IMR-90 (cell line): ENCODE measurements at regions of chr11 and their contacts with region 1.

Region 1: DNA sequence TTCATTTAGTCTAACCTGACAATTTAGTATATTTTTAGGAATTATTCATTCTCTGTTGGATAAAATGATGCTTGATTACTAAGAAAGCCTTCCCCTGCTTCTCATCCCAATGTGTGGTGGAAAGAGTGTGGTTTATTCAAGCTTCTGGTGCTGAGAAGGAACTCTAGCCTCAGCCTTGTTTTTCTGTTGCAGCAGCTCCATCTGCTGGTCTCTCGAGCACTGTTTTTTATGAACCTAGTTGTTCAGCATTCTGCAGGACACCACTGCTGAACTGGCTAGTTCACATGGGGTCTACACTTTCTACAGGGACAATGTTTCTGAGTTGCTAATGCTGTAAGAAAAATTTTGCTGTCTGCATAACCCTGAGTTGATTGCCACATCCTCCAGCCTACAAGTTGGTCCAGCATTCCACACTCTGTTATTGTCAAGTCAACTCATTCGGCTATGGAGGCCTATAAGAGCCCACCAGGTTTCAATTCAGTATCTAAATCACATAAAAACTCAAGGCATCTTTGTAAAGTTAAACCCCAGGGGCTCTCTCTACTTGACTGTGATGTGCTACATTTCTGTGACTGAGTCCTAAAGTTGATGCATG is 14.3 kb downstream of the OR2AG2 start:
- DNase-seq: peak; percentile 59
- ATAC-seq: peak; percentile 90
- H3K4me3 ChIP-seq: no peak overlapping the region
- H3K27ac ChIP-seq: no peak overlapping the region
- H3K4me1 ChIP-seq: no peaks in the 10 kb centered on the region
- H3K27me3 ChIP-seq: no peaks in the 10 kb centered on the region; the same call in 1 of the 2 replicates
- CTCF ChIP-seq: peak; percentile 54
- POLR2A ChIP-seq: no peak
- RAD21 ChIP-seq: peak; percentile 50; the same call in 1 of the 2 replicates

Region 2: DNA sequence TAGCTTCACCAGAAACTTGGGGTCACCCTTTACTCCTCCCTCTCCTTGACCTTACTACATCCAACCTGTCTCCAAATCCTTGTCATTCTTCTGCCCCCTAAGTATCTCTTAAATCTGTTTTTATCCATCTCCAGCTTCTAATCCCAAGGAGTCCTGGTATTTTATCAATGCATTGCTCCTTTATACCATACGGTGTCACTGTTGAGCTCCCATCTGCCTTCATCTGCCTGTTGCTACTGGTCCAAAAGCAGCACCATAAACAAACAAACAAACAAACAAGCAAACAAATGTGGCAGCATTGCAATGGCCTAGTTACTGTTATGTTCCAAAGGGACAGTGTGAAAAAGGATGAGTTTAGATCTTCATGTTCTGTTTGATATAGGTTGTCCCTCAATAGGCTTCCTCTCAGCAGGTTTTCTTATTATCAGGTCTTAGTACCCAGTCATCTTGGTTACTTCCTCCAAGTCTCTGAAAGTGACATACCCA is 226.2 kb before region 1 on chr11:
- CTCF ChIA-PET with region 1: no interaction called
- POLR2A ChIA-PET with region 1: no interaction called
- dilution Hi-C with region 1: no loop called
- in situ Hi-C with region 1: no loop called
- intact Hi-C with region 1: loop called (anchors 5 kb)
- DNase-seq: peak; percentile 52
- ATAC-seq: peak; percentile 95
- H3K4me3 ChIP-seq: no peak overlapping the region
- H3K27ac ChIP-seq: no peak overlapping the region
- H3K4me1 ChIP-seq: no peaks in the 10 kb centered on the region
- H3K27me3 ChIP-seq: no peaks in the 10 kb centered on the region
- CTCF ChIP-seq: peak; percentile 74
- POLR2A ChIP-seq: no peak
- RAD21 ChIP-seq: peak; percentile 83

Region 3: DNA sequence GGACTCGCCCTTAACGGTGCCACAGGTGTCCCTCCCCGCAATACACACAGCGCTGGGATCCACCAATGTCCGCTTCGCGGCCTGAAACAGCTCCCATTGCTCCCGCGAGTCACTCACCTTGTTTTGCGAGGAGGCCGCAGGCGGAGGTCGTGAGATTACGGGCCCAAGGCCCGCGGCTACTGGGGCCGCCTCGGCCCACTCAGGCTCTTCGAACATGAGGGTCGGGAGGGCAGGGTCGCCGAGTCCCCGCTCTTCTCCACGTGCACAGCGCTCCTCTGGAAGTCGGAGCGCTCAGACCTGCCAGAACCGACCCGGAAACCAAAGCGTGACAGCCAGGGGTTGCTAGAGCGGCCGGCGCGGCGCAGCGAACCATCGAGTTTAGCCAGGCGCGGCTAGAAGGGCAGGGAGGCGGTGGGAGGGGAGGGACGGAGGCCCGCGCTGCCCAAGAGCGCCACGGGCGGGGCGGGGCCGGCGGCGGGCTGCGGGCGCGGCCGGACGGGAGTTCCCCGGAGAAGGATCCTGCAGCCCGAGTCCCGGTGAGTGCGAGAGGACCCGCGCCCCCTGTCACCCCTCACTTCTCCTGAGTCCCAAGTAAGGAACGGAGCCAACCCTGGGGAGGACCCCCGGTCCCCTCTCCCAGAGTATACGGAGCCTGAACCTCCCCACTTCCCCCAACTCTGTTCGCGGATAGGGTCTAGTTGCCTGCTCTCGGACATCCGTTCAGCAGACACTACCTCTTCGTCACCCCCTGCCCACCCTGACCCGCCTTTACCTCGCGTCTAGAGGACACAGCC is 154.0 kb before region 1 on chr11 and contains the starts of genes ILK and RRP8:
- CTCF ChIA-PET with region 1: no interaction called
- POLR2A ChIA-PET with region 1: no interaction called
- dilution Hi-C with region 1: no loop called
- in situ Hi-C with region 1: no loop called
- intact Hi-C with region 1: loop called (anchors 5 kb)
- DNase-seq: peak; percentile 86
- ATAC-seq: peak; percentile 80
- H3K4me3 ChIP-seq: peak within 1 kb of the TSS; percentile 90
- H3K27ac ChIP-seq: peak within 1 kb of the TSS; percentile 95
- H3K4me1 ChIP-seq: peaks cover 20% of the 10 kb centered on the region
- H3K27me3 ChIP-seq: no peaks in the 10 kb centered on the region
- CTCF ChIP-seq: peak; percentile 27
- POLR2A ChIP-seq: peak; percentile 30; the same call in 1 of the 2 replicates
- RAD21 ChIP-seq: peak; percentile 26
- total RNA-seq, gene ILK: 272 and 339 TPM in 2 replicates
- total RNA-seq, gene RRP8: 11.1 and 11.5 TPM in 2 replicates

Region 4: GRCh38 chr11:6619004-6619745 is 138.3 kb before region 1 on chr11 and contains the start of gene TPP1:
- CTCF ChIA-PET with region 1: no interaction called
- POLR2A ChIA-PET with region 1: no interaction called
- dilution Hi-C with region 1: no loop called
- in situ Hi-C with region 1: no loop called
- intact Hi-C with region 1: loop called (anchors 5 kb)
- DNase-seq: peak; percentile 94
- ATAC-seq: peak; percentile 93
- H3K4me3 ChIP-seq: peak within 1 kb of the TSS; percentile 75
- H3K27ac ChIP-seq: peak within 1 kb of the TSS; percentile 81
- H3K4me1 ChIP-seq: peaks cover 7% of the 10 kb centered on the region
- H3K27me3 ChIP-seq: no peaks in the 10 kb centered on the region
- CTCF ChIP-seq: no peak
- POLR2A ChIP-seq: peak; percentile 68
- RAD21 ChIP-seq: peak; percentile 1; the same call in 1 of the 2 replicates
- total RNA-seq, gene TPP1: 16.7 and 33.5 TPM in 2 replicates

Region 5: DNA sequence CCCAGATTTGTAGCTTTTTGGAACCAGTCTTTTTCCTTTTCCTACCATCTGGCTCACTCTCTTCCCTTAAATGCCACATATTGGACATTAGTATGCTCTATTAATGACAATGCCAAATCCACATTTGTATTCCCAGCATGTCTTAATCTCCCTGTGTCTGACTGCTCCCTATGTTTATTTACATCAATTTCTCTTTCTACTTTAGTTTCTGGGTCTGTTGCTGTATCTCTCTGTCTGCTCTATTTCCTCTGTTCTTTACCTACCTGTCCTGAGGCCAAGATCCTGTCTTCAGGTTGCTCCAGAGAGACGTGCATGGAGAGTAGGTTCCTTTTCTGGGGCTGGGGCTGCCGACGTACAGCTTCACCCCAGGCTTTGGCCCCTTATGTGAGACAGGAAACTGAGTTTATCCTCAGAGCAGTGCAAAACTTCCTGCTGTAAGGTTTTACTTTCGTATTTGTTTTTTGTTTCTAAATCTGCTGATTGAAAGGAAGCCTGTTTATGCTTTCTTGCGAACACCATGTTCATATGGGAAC is 11.3 kb before region 1 on chr11:
- CTCF ChIA-PET with region 1: interaction called, 17 read pairs
- POLR2A ChIA-PET with region 1: no interaction called
- dilution Hi-C with region 1: no loop called
- in situ Hi-C with region 1: no loop called
- intact Hi-C with region 1: no loop called
- DNase-seq: no peak
- ATAC-seq: no peak
- H3K4me3 ChIP-seq: no peak overlapping the region
- H3K27ac ChIP-seq: no peak overlapping the region
- H3K4me1 ChIP-seq: no peaks in the 10 kb centered on the region
- H3K27me3 ChIP-seq: peaks cover 2% of the 10 kb centered on the region; the same call in 1 of the 2 replicates
- CTCF ChIP-seq: no peak
- POLR2A ChIP-seq: no peak
- RAD21 ChIP-seq: no peak

Region 6: DNA sequence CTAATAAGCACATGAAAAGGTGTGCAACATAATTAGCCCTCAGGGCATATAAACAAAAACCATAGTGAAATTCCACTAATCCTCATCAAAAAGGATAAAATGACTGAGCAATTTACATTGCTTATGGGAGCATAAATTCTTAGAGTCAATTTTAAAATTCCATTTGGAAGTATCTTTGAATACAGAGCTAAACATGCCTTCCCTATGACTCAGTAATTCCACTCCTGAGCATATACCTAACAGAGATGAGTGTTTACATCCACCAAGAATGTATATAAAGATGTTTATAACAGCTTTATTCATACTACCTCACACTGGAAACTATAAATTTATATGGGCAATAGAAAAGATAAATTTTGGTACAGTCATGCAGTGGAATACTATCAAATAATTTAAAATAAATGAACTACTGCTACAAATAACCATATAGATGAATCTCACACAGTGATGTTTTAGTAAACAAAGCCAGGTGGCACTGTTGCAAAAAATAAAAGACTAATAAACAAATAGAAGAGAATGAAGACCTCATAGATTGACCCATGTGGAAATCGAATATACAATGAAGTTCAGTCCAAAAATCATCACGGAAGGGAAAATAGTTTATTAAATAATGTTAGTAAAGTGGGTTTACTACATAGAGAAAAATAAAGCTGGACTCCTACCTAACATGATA is 143.0 kb after region 1 on chr11:
- CTCF ChIA-PET with region 1: no interaction called
- POLR2A ChIA-PET with region 1: no interaction called
- dilution Hi-C with region 1: no loop called
- in situ Hi-C with region 1: no loop called
- intact Hi-C with region 1: no loop called
- DNase-seq: peak; percentile 8
- ATAC-seq: no peak
- H3K4me3 ChIP-seq: no peak overlapping the region
- H3K27ac ChIP-seq: no peak overlapping the region
- H3K4me1 ChIP-seq: no peaks in the 10 kb centered on the region
- H3K27me3 ChIP-seq: no peaks in the 10 kb centered on the region
- CTCF ChIP-seq: no peak
- POLR2A ChIP-seq: no peak
- RAD21 ChIP-seq: no peak

Region 7: GRCh38 chr11:7442588-7443215 is 685.2 kb after region 1 on chr11:
- CTCF ChIA-PET with region 1: no interaction called
- POLR2A ChIA-PET with region 1: no interaction called
- dilution Hi-C with region 1: no loop called
- in situ Hi-C with region 1: no loop called
- intact Hi-C with region 1: loop called (anchors 5 kb)
- DNase-seq: peak; percentile 31
- ATAC-seq: peak; percentile 96
- H3K4me3 ChIP-seq: no peak overlapping the region
- H3K27ac ChIP-seq: no peak overlapping the region
- H3K4me1 ChIP-seq: no peaks in the 10 kb centered on the region
- H3K27me3 ChIP-seq: no peaks in the 10 kb centered on the region; the same call in 1 of the 2 replicates
- CTCF ChIP-seq: peak; percentile 71
- POLR2A ChIP-seq: no peak
- RAD21 ChIP-seq: peak; percentile 69